ENCODE measurements at regions of chr11 and their contacts with region 1.

Region 1: DNA sequence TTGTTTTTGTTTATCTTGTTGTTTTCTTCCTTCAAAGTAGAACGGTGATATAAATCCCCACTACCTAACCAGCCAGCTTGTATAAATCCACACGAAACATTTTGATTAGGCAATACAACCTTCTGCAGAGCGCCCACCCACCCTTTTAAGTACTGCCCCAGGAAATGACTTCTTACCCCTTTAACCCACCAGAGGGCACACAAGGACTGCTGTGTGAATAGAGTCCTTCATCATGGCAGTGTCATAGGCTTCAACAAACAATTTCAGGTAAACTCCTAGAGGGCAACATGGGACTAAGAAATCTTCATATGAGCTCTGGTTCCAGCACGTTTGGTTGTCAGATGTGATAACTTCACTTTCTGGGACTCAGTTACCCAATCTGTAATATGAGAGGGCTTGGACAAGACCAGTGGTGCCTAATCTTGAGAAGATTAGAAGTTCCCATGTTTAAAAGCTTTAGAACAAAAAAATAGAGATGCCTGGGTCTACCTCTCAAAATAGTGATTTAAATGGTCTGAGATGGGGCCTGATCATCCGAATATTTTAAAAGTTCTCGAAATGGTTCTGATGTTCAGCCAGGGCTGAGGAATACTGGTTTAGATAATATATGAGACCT is 56.1 kb downstream of the PIWIL4 start:
- DNase-seq: peak; percentile 35 to 91
- H3K4me3 ChIP-seq: no peak overlapping the region
- H3K27ac ChIP-seq: no peak overlapping the region
- H3K4me1 ChIP-seq: peaks cover 0 to 6% (median 3%) of the 10 kb centered on the region in 4 donors
- H3K27me3 ChIP-seq: no peaks in the 10 kb centered on the region
- CTCF ChIP-seq: peak in 5 of 7 experiments; percentile 53 to 78 (median 59)
- EP300 ChIP-seq: no peak
- POLR2A ChIP-seq: no peak

Region 2: GRCh38 chr11:94731880-94732601 is 108.8 kb after region 1 on chr11:
- intact Hi-C with region 1: loop called (anchors 10 kb)
- DNase-seq: no peak
- H3K4me3 ChIP-seq: no peak overlapping the region
- H3K27ac ChIP-seq: peak overlapping the region in 4 of 5 donors; percentile 55 to 66 (median 59)
- H3K4me1 ChIP-seq: peaks cover 0 to 19% (median 6%) of the 10 kb centered on the region in 4 donors
- H3K27me3 ChIP-seq: no peaks in the 10 kb centered on the region
- CTCF ChIP-seq: no peak
- EP300 ChIP-seq: no peak
- POLR2A ChIP-seq: no peak

Measured in stomach (tissue), 19 donors.